Mammary epithelial cell (primary cell): ENCODE measurements at regions of chr13 and their contacts with region 1.

Region 1: DNA sequence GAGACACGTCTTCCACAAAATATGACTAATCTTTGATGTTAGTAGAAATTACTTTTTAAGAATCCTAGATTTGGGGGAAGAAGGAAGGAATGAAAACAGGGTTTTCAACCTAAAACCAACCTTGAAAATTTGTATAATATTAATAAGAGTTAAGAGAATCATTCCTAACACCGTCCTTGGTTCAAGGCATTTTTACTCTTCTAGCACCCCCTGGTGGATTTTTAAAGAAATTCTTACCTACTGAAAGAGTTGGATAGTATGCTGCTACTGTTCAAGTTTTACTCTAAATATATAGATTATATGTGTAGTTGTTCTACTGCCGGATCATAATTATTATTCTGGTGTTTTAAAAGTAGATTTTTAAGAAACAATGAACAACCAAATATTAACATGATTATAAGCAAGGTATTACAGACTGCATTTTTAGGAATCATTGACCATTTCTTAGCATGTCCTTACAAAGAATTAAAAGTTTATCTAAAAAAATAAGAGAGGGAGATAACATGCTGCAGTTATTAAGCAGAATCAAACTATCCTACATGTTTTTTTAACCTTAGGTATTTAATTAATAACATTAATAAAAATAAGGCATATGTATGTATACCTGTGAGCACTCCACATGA is 7.4 kb upstream of the SLITRK6 start:
- DNase-seq: peak; percentile 21
- H3K4me3 ChIP-seq: no peak overlapping the region
- H3K27ac ChIP-seq: no peak overlapping the region
- H3K4me1 ChIP-seq: no peaks in the 10 kb centered on the region
- H3K27me3 ChIP-seq: no peaks in the 10 kb centered on the region
- CTCF ChIP-seq: peak; percentile 35 to 61

Region 2: DNA sequence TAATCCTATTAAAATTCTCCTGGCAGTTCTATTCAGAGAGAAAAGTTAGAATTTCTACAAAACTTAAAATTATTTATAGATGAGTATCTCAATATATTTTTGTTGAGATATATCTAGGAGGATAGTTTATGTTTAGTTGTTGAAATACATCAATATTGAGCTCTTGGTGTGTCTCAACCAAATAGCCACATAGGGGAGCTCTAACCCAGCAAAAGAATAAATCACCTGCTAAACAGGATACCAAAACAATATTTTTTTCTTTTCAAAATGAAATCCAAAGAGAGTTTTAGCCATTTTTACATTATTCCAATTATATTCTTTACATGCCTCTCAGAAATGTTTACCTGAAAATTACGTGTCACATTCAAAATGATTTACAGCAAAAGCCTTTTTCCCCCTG is 962.2 kb before region 1 on chr13:
- CTCF ChIA-PET with region 1: no interaction called
- dilution Hi-C with region 1: no loop called
- in situ Hi-C with region 1: no loop called
- intact Hi-C with region 1: loop called (anchors 2 kb)
- DNase-seq: peak; percentile 9
- H3K4me3 ChIP-seq: no peak overlapping the region
- H3K27ac ChIP-seq: no peak overlapping the region
- H3K4me1 ChIP-seq: no peaks in the 10 kb centered on the region
- H3K27me3 ChIP-seq: peaks cover 2% of the 10 kb centered on the region
- CTCF ChIP-seq: peak; percentile 40 to 49

Region 3: DNA sequence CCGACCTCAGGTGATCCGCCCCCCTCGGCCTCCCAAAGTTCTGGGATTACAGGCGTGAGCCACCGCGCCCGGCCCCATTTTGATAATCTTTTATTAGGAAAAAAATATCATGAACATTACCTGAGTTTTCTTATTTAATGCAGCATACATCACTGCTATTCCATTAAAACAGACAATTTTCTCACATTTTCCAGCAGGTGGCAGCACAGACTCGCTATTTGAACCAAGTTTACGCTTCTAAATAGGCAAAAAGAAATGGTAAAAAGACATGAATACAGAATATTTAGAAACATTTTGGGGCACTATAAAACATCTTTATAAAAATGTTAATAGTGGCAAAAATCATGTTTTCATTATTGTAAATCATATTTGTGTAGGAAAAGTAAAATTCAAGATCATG is 910.5 kb before region 1 on chr13:
- CTCF ChIA-PET with region 1: no interaction called
- dilution Hi-C with region 1: loop called (anchors 25 kb)
- in situ Hi-C with region 1: no loop called
- intact Hi-C with region 1: loop called (anchors 1 kb)
- DNase-seq: peak; percentile 42
- H3K4me3 ChIP-seq: no peak overlapping the region
- H3K27ac ChIP-seq: no peak overlapping the region
- H3K4me1 ChIP-seq: no peaks in the 10 kb centered on the region
- H3K27me3 ChIP-seq: no peaks in the 10 kb centered on the region
- CTCF ChIP-seq: peak; percentile 58 to 60

Region 4: GRCh38 chr13:84917252-84917878 is 889.3 kb before region 1 on chr13:
- CTCF ChIA-PET with region 1: no interaction called
- dilution Hi-C with region 1: no loop called
- in situ Hi-C with region 1: loop called (anchors 5 to 10 kb)
- intact Hi-C with region 1: loop called (anchors 1 kb)
- DNase-seq: peak; percentile 4
- H3K4me3 ChIP-seq: no peak overlapping the region
- H3K27ac ChIP-seq: no peak overlapping the region
- H3K4me1 ChIP-seq: no peaks in the 10 kb centered on the region
- H3K27me3 ChIP-seq: no peaks in the 10 kb centered on the region
- CTCF ChIP-seq: peak; percentile 30 to 39

Region 5: GRCh38 chr13:85261757-85262346 is 544.8 kb before region 1 on chr13:
- CTCF ChIA-PET with region 1: no interaction called
- dilution Hi-C with region 1: no loop called
- in situ Hi-C with region 1: no loop called
- intact Hi-C with region 1: loop called (anchors 10 kb)
- DNase-seq: no peak
- H3K4me3 ChIP-seq: no peak overlapping the region
- H3K27ac ChIP-seq: no peak overlapping the region
- H3K4me1 ChIP-seq: peaks cover 3% of the 10 kb centered on the region
- H3K27me3 ChIP-seq: no peaks in the 10 kb centered on the region
- CTCF ChIP-seq: peak; percentile 53 to 58

Region 6: DNA sequence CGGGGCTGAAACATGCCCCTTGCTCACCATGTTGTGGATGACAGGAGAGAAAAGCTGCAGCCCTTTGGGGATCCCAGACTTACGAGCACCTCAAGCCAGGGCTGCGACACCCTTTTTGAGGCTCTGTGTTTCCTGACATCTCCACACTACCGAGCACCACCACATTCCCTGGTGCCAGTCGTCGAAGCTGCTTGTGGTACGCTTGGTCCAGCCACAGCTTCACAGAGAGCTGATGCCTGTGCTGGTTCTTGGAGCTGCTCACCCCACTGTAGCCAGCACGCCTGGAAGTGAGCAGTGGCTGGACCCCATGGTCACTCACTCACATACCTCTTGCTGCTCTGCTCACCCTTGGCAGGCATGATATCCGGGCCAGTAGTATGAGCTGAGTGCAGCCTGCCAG is 374.9 kb before region 1 on chr13:
- CTCF ChIA-PET with region 1: no interaction called
- dilution Hi-C with region 1: no loop called
- in situ Hi-C with region 1: no loop called
- intact Hi-C with region 1: no loop called
- DNase-seq: no peak
- H3K4me3 ChIP-seq: no peak overlapping the region
- H3K27ac ChIP-seq: no peak overlapping the region
- H3K4me1 ChIP-seq: no peaks in the 10 kb centered on the region
- H3K27me3 ChIP-seq: no peaks in the 10 kb centered on the region
- CTCF ChIP-seq: no peak

Region 7: DNA sequence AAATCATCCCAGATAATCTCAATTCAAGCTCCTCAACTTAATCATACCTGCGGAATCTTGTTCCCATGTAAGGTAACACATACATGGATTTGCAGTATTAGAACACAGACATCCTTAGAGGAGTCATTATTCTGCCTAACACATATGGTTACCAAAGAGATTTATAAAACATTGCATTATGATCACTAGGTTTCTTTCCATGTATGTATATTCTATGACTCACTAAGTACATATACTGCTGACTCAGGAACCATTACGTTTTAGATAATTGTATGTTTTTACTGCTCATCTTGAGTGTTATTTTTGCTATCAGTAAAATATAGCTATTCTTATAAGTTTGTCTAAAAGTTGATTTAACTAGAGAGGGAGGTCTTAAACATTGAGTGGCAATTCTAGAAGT is 190.4 kb before region 1 on chr13:
- CTCF ChIA-PET with region 1: no interaction called
- dilution Hi-C with region 1: no loop called
- in situ Hi-C with region 1: no loop called
- intact Hi-C with region 1: no loop called
- DNase-seq: peak; percentile 21
- H3K4me3 ChIP-seq: no peak overlapping the region
- H3K27ac ChIP-seq: no peak overlapping the region
- H3K4me1 ChIP-seq: no peaks in the 10 kb centered on the region
- H3K27me3 ChIP-seq: no peaks in the 10 kb centered on the region
- CTCF ChIP-seq: no peak

Region 8: DNA sequence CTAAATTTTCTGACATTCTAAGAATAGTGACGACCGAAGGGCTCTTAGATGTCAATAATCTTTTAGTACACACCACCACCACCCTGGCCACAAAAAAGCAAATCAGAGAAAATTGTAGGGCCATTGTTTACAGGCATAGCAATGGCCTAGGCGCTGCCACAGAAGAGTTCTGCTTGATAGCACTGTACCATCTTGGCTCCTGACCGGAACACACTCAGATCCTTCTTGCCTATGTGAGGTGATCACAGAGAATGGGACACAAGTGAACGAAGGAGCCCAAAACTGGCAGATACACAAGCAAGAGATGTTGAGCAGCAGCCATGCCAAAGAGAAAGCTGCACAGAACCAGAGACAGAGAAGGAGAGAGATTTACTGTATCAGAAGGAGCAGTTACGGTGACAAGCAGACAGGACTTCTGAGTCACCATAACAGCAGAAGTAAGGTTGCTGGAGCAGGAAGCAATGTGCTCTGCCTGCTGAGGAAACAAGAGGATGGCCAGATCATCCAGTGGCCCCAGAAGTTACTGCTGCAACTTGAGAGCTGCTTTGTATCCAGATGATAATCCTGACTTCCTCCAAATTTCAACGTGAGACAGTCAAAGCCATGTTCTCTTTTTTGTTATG is 112.7 kb before region 1 on chr13:
- CTCF ChIA-PET with region 1: no interaction called
- dilution Hi-C with region 1: no loop called
- in situ Hi-C with region 1: no loop called
- intact Hi-C with region 1: no loop called
- DNase-seq: no peak
- H3K4me3 ChIP-seq: no peak overlapping the region
- H3K27ac ChIP-seq: no peak overlapping the region
- H3K4me1 ChIP-seq: no peaks in the 10 kb centered on the region
- H3K27me3 ChIP-seq: no peaks in the 10 kb centered on the region
- CTCF ChIP-seq: no peak